Mammary epithelial cell (primary cell): ENCODE measurements at regions of chr2 and their contacts with region 1.

Region 1: DNA sequence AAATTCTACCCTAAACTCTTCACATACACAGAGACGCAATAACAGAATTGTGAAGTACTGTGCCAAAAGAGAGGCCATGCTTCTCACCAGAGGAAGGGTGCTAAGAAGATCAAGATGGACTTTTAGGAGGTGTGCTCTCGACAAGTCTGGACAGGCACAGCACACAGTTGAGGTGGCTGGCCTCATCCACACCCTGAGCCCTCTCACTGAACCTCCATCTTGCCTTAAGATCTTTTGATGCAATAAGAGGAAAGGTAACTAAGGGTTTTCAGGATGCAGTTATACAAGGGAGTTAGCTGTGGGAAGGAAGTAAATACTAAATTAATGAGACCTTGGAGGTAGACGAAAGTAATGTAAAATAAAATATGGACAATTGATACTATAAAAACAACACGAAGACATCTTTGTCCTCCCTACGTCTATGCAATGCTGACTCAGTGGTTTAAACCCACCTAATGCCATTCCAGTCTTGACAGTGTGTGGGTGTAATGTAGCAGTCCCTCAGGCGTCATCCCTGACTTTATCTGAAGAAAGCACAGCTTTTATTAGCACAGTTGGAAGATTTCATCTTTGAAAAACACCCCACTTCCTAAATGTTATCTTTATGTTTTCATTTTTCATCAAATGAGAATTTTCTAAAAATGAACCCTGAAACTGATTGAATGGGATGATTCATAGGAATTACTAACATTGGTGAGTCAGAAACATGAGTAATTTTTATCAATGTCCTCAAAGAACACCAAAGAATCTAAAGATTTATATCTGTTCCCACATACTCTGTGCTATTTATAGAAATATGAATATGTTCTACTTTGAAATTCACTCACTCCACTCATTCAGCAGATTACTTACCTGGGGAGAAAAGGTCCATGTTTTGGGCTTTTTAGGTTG is 34.0 kb upstream of the MALL start:
- DNase-seq: peak; percentile 89
- H3K4me3 ChIP-seq: no peak overlapping the region
- H3K27ac ChIP-seq: peak overlapping the region; percentile 98
- H3K4me1 ChIP-seq: peaks cover 25% of the 10 kb centered on the region
- H3K27me3 ChIP-seq: no peaks in the 10 kb centered on the region
- CTCF ChIP-seq: no peak

Region 2: DNA sequence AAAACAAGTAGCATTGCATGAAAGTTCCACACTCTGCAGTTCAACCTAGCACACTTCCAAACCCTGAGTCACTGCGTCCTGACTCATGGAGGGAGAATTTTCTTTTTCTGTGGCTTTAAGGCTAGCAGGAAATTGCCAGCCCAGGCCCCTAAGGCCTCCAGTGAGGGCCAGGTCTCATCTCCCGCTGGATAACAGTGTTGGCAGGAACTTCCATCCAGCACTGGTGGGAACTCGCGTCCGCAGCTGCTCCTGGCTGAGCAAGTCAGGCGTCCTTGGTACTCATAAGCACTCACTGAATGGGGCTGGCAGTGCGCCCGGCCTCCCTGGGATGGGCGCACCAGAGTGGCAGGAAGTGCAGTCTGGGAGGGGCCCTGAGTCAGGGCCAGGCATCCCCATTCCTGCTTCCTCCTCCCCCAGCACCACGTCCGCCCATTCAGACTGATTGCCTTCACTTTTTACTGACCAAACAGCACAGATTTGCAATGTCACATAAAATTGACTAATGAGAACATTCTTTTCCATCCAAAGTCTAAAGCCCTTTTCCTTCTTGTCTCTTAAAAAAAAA is 48.2 kb before region 1 on chr2:
- CTCF ChIA-PET with region 1: no interaction called
- dilution Hi-C with region 1: no loop called
- in situ Hi-C with region 1: no loop called
- intact Hi-C with region 1: loop called (anchors 1 kb)
- DNase-seq: peak; percentile 100
- H3K4me3 ChIP-seq: peak overlapping the region in 2 of 3 experiments; percentile 1 to 26
- H3K27ac ChIP-seq: peak overlapping the region; percentile 97
- H3K4me1 ChIP-seq: peaks cover 80% of the 10 kb centered on the region
- H3K27me3 ChIP-seq: no peaks in the 10 kb centered on the region
- CTCF ChIP-seq: no peak

Region 3: DNA sequence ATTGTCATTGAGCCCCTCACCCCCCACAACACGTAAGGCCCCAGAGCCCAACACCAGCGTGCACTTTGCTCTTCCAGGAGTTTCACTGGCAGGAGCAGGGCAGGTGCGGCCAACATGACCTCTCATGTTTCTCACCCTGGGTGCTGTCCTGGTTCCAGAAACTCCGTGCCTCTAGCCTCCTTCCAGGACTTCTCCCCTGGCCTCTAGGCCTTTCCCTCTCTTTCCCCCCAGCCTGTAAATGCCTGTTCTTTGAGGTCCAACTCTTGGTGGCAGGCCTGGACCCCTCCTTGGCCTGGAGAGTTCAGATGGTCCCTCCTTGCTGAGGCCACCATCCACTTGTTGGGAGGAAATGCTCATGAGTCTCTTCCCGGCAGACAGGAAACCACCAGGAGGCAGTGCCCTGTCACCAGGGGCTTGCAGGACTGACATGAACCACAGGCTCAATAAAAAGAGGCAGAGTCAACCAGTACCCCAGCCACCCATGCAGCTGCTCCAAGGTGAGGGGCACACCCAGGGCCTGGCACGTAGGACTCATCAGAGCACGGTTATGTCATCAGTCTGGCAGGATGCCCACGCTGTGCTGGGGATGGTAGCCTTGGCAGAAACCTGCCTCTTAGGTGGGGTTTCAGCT is 35.5 kb before region 1 on chr2:
- CTCF ChIA-PET with region 1: no interaction called
- dilution Hi-C with region 1: no loop called
- in situ Hi-C with region 1: no loop called
- intact Hi-C with region 1: no loop called
- DNase-seq: peak; percentile 62
- H3K4me3 ChIP-seq: peak overlapping the region; percentile 79 to 87 (median 83)
- H3K27ac ChIP-seq: peak overlapping the region; percentile 58
- H3K4me1 ChIP-seq: peaks cover 30% of the 10 kb centered on the region
- H3K27me3 ChIP-seq: no peaks in the 10 kb centered on the region
- CTCF ChIP-seq: peak; percentile 22 to 58